Prostate gland (tissue), 2 donors: ENCODE measurements at regions of chr2 and their contacts with region 1.

Region 1: GRCh38 chr2:218186355-218186766 is 19.6 kb upstream of the CXCR1 start:
- DNase-seq: peak; percentile 55
- H3K4me3 ChIP-seq: no peak overlapping the region
- H3K27ac ChIP-seq: no peak overlapping the region
- H3K4me1 ChIP-seq: no peaks in the 10 kb centered on the region
- H3K27me3 ChIP-seq: no peaks in the 10 kb centered on the region
- CTCF ChIP-seq: peak; percentile 43 to 86 (median 75)
- POLR2A ChIP-seq: no peak

Region 2: DNA sequence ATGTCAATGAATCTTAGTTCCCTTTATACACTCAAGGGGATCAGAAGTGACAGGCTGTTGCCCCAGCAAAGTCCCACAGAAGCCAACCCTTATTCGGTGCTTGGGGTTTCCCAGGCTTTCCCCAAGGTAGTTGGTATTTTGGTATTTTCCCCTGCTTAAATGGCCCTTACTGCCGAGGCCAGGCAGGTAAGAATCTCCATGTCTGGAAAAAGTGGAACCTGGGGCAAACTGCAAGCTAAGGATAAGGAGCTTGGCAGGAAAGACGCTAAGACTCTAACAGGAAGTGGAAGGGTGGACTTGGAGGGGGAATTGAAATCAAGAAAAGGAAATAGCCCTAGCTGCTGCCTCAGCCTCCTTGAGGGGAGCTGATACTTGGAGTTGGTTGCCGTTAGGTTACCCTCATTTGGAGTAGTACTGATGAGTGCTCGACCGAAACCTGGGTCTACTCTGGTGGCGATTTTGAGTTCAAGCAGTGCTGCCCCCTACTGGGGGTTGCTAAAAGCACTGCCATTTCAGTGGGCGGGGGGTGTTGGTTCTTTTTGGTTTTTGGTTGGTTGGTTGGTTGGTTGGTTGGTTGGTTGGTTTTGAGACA is 71.1 kb after region 1 on chr2:
- intact Hi-C with region 1: loop called (anchors 5 kb)
- DNase-seq: no peak
- H3K4me3 ChIP-seq: no peak overlapping the region
- H3K27ac ChIP-seq: no peak overlapping the region
- H3K4me1 ChIP-seq: no peaks in the 10 kb centered on the region
- H3K27me3 ChIP-seq: no peaks in the 10 kb centered on the region
- CTCF ChIP-seq: peak in 3 of 4 experiments; percentile 31 to 47 (median 45)
- POLR2A ChIP-seq: no peak